ENCODE measurements at regions of chr9 and their contacts with region 1.

Region 1: GRCh38 chr9:19379697-19380046 is 364 bp downstream of the RPS6 start:
- DNase-seq: peak; percentile 54
- ATAC-seq: peak; percentile 16
- H3K4me3 Mint-ChIP-seq: peak overlapping the region; percentile 99
- H3K27ac Mint-ChIP-seq: peak overlapping the region; percentile 100
- H3K4me1 Mint-ChIP-seq: peaks cover 41% of the 10 kb centered on the region
- H3K27me3 Mint-ChIP-seq: no peaks in the 10 kb centered on the region

Region 2: DNA sequence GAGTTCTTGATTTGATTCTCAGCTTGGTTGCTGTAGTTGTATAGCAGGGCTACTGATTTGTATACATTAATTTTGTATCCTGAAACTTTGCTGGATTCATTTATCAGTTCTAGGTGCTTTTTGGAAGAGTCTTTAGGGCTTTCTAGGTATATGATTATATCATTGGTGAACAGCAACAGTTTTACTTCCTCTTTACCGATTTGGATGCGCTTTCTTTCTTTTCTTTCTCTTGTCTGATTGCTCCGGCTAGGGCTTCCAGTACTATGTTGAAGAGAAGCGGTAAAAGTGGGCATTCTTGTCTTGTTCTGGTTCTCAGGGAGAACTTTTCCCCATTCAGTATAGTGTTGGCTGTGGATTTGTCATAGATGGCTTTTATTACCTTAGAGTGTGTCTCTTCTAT is 505.6 kb before region 1 on chr9:
- CTCF ChIA-PET with region 1: no interaction called
- POLR2A ChIA-PET with region 1: no interaction called
- intact Hi-C with region 1: no loop called
- DNase-seq: no peak
- ATAC-seq: no peak
- H3K4me3 Mint-ChIP-seq: no peak overlapping the region
- H3K27ac Mint-ChIP-seq: no peak overlapping the region
- H3K4me1 Mint-ChIP-seq: no peaks in the 10 kb centered on the region
- H3K27me3 Mint-ChIP-seq: peaks cover 15% of the 10 kb centered on the region

Region 3: GRCh38 chr9:19102631-19103345 is 276.9 kb before region 1 on chr9 and contains the start of gene HAUS6:
- CTCF ChIA-PET with region 1: no interaction called
- POLR2A ChIA-PET with region 1: no interaction called
- intact Hi-C with region 1: loop called (anchors 1 kb)
- DNase-seq: peak; percentile 98
- ATAC-seq: peak; percentile 98
- H3K4me3 Mint-ChIP-seq: peak within 1 kb of the TSS; percentile 96
- H3K27ac Mint-ChIP-seq: peak within 1 kb of the TSS; percentile 96
- H3K4me1 Mint-ChIP-seq: peaks cover 25% of the 10 kb centered on the region
- H3K27me3 Mint-ChIP-seq: no peaks in the 10 kb centered on the region
- total RNA-seq, gene HAUS6: 29.3 to 32.5 TPM

Region 4: GRCh38 chr9:19184144-19184917 is 195.3 kb before region 1 on chr9:
- CTCF ChIA-PET with region 1: no interaction called
- POLR2A ChIA-PET with region 1: interaction called, 5 read pairs
- intact Hi-C with region 1: loop called (anchors 1 kb)
- DNase-seq: peak; percentile 91
- ATAC-seq: peak; percentile 99
- H3K4me3 Mint-ChIP-seq: peak overlapping the region; percentile 56
- H3K27ac Mint-ChIP-seq: peak overlapping the region; percentile 91
- H3K4me1 Mint-ChIP-seq: peaks cover 21% of the 10 kb centered on the region
- H3K27me3 Mint-ChIP-seq: no peaks in the 10 kb centered on the region

Region 5: DNA sequence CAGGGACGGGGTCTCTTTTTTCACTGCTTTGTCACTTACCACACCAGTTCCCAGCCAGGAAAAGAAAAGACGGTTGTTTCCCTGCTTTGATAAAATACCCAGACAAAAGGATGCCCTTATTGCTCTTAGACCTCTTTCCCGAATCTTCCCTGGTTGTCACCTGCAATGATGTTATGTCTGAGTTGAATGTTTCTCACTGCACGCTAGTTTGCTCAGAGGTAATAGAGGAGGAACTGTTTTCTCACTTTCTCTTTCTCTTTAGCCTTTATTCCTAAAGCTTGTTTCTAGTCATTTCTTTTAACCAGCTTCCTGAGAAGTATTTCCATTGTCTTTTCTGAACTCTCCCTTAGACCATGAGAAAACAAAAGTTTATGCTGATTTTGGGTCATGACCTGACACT is 62.1 kb after region 1 on chr9:
- CTCF ChIA-PET with region 1: no interaction called
- POLR2A ChIA-PET with region 1: no interaction called
- intact Hi-C with region 1: loop called in 1 of 2 experiments (anchors 5 kb)
- DNase-seq: no peak
- ATAC-seq: peak; percentile 90
- H3K4me3 Mint-ChIP-seq: peak overlapping the region; percentile 52
- H3K27ac Mint-ChIP-seq: peak overlapping the region; percentile 78
- H3K4me1 Mint-ChIP-seq: peaks cover 14% of the 10 kb centered on the region
- H3K27me3 Mint-ChIP-seq: no peaks in the 10 kb centered on the region

Region 6: DNA sequence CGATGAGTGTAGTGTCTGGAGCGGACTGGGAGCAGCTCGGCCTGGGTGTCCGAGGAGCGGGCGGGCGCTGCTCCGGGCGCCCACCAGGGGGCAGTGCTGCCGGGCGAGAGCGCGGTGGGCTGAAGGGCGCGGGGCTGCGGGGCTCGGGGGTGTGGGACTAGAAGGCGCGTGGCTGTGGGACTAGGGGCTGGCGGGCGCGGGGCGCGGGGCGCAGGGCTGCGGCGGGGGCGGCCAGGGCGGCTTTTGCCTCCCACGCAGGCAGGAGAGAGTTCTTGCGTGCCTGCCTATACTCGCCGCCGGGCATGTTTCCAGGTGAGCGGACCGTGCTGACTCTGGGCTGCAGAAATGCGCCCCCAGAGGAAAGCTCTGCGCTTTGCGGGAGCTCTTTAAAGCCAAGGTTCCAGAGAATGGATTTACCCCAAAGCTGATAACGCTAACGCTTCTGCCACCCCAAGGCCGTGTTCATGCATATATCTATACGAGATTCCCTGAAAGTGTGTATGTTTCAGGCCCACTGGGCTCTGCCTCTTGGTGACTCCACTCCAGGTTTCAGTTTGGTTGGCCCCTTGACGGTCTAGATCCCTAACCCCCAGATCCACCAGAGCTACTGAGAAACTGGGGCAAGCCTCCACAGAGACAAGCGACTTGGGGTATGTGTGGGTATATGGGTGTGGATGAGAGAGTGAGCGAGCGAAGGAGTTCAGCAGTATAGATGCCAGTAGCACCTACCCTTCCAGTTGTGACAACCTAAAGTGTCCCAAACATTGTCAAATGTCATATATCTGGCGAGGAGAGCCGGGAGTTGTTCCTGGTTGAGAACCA is 85.3 kb after region 1 on chr9:
- CTCF ChIA-PET with region 1: interaction called, 9 read pairs
- POLR2A ChIA-PET with region 1: interaction called, 3 read pairs
- intact Hi-C with region 1: loop called in 1 of 2 experiments (anchors 2 kb)
- DNase-seq: peak; percentile 83
- ATAC-seq: peak; percentile 89
- H3K4me3 Mint-ChIP-seq: peak overlapping the region; percentile 77
- H3K27ac Mint-ChIP-seq: peak overlapping the region; percentile 71
- H3K4me1 Mint-ChIP-seq: peaks cover 7% of the 10 kb centered on the region
- H3K27me3 Mint-ChIP-seq: no peaks in the 10 kb centered on the region

Region 7: DNA sequence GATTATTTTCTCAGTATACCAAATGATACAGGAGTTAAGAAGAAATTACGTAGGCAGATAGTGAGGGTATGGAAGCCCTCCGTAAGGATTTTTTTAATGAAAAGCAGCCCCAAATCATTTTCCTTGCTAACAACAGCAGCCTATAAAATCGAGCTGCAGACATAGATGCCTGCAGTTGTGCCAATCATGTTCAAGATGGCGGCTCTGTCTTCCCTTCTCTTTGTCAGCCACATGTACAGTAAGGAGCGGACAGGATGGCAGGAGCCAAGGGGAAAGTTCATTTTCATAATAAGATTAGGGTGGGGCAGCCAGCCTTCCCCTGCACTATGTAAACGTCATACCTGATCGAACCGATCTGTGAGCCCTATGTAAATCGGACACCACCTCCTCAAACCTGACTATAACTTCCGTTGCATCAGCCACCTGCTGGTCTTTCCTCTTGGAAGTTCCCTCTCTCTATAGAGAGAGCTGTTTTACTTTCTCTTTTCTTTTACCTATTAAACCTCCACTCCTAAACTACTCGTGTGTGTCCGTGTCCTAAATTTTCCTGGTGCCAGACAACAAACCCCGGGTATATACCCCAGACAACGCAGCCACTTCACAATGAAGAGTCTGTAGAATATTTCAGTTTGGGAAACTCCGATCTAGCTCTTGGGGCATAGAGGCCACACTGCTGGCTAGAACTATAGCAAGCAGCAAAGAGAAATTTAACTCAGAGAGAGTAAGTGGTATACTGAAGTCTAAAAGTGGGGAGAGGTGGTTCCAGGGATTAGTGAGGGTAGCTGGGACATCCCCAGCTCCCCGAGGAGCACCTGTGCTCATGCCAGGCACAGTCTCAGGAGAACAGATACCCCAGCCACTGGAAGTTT is 430.0 kb after region 1 on chr9:
- CTCF ChIA-PET with region 1: no interaction called
- POLR2A ChIA-PET with region 1: no interaction called
- intact Hi-C with region 1: no loop called
- DNase-seq: no peak
- ATAC-seq: no peak
- H3K4me3 Mint-ChIP-seq: no peak overlapping the region
- H3K27ac Mint-ChIP-seq: no peak overlapping the region
- H3K4me1 Mint-ChIP-seq: no peaks in the 10 kb centered on the region
- H3K27me3 Mint-ChIP-seq: peaks cover 12% of the 10 kb centered on the region